Activated CD4-positive, alpha-beta T cell treated with anti-CD3 and anti-CD28 coated beads, Interleukin-2, amount 10 ng/mL, durations not matched to agents 24 days and 14 days (primary cell): ENCODE measurements at regions of chr5 and their contacts with region 1.

Region 1: DNA sequence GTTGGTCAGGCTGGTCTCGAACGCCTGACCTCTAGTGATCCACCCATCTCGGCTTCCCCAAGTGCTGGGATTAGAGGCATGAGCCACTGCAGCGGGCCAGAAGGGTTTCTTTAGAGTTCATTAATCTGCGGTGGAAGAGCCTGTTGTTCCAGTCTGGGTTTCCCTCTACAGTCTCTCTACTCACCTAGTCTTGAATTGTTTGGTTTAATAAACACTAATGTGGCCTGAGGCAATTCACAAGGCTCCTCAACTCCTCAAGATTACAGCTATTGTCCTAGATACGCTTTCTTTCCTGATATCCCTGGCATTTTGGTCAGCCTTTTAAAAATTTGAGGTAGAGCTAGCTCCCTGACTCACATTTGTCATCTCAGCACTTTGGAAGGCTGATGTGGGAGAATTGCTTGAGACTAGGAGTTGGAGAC is 4.5 kb upstream of the SAR1B start:
- DNase-seq: no peak
- H3K4me3 Mint-ChIP-seq: no peak overlapping the region
- H3K27ac Mint-ChIP-seq: no peak overlapping the region
- H3K4me1 Mint-ChIP-seq: peaks cover 6% of the 10 kb centered on the region
- H3K27me3 Mint-ChIP-seq: no peaks in the 10 kb centered on the region

Region 2: GRCh38 chr5:134609232-134609851 is 27.8 kb before region 1 on chr5:
- intact Hi-C with region 1: loop called (anchors 1 kb)
- DNase-seq: peak; percentile 72
- H3K4me3 Mint-ChIP-seq: peak overlapping the region; percentile 76
- H3K27ac Mint-ChIP-seq: peak overlapping the region; percentile 95
- H3K4me1 Mint-ChIP-seq: peaks cover 51% of the 10 kb centered on the region
- H3K27me3 Mint-ChIP-seq: no peaks in the 10 kb centered on the region